HCT116 (cell line): ENCODE measurements at regions of chr4 and their contacts with region 1.

Region 1: DNA sequence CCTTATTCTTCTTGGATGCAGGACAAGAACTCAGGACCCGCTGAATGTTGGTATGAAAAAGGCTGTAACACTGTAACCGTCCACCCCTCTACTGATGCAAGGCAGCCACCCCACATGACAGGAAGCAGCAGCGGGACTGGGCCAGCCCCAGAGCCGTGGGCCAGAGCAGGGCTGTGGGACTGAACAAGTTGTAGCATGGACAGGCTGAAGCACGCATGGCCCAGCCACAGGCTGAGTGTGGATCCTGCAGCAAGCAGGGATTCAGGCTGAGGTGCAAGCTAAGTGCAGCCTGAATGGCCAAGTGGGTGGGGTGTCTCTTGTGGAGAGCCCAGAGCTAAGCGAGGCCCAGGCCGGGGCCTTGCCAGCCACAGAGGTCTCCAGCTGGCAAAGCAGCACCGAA is 632.2 kb downstream of the SPOCK3 start:
- DNase-seq: no peak
- ATAC-seq: no peak
- H3K4me3 ChIP-seq: no peak overlapping the region
- H3K27ac ChIP-seq: no peak overlapping the region
- H3K4me1 ChIP-seq: no peaks in the 10 kb centered on the region
- H3K27me3 ChIP-seq: no peaks in the 10 kb centered on the region
- CTCF ChIP-seq: no peak
- POLR2A ChIP-seq: no peak
- RAD21 ChIP-seq: no peak

Region 2: GRCh38 chr4:167000141-167000852 is 398.2 kb after region 1 on chr4:
- CTCF ChIA-PET with region 1: no interaction called
- POLR2A ChIA-PET with region 1: no interaction called
- RAD21 ChIA-PET with region 1: no interaction called
- intact Hi-C with region 1: loop called (anchors 10 kb)
- DNase-seq: peak; percentile 21
- ATAC-seq: peak; percentile 66
- H3K4me3 ChIP-seq: no peak overlapping the region
- H3K27ac ChIP-seq: no peak overlapping the region
- H3K4me1 ChIP-seq: peaks cover 3 to 8% of the 10 kb centered on the region in 2 experiments; a peak in 3 of 4 replicates
- H3K27me3 ChIP-seq: no peaks in the 10 kb centered on the region
- CTCF ChIP-seq: no peak
- POLR2A ChIP-seq: no peak
- RAD21 ChIP-seq: no peak